B cell (primary cell): ENCODE measurements at regions of chr7 and their contacts with region 1.

Region 1: GRCh38 chr7:123865517-123866117 is 20.6 kb downstream of the HYAL4 start:
- DNase-seq: peak; percentile 59
- ATAC-seq: peak; percentile 53
- H3K4me3 ChIP-seq: no peak overlapping the region
- H3K4me3 Mint-ChIP-seq: no peak overlapping the region
- H3K27ac ChIP-seq: no peak overlapping the region
- H3K27ac Mint-ChIP-seq: no peak overlapping the region
- H3K4me1 ChIP-seq: no peaks in the 10 kb centered on the region
- H3K4me1 Mint-ChIP-seq: no peaks in the 10 kb centered on the region
- H3K27me3 ChIP-seq: no peaks in the 10 kb centered on the region
- H3K27me3 Mint-ChIP-seq: peaks cover 3% of the 10 kb centered on the region
- CTCF ChIP-seq: peak; percentile 82

Region 2: GRCh38 chr7:123580406-123581161 is 285.0 kb before region 1 on chr7:
- CTCF ChIA-PET with region 1: no interaction called
- POLR2A ChIA-PET with region 1: no interaction called
- intact Hi-C with region 1: loop called (anchors 5 kb)
- DNase-seq: no peak
- ATAC-seq: no peak
- H3K4me3 ChIP-seq: no peak overlapping the region
- H3K4me3 Mint-ChIP-seq: no peak overlapping the region
- H3K27ac ChIP-seq: no peak overlapping the region
- H3K27ac Mint-ChIP-seq: no peak overlapping the region
- H3K4me1 ChIP-seq: no peaks in the 10 kb centered on the region
- H3K4me1 Mint-ChIP-seq: no peaks in the 10 kb centered on the region
- H3K27me3 ChIP-seq: peaks cover 0 to 21% (median 6%) of the 10 kb centered on the region in 4 experiments
- H3K27me3 Mint-ChIP-seq: peaks cover 29% of the 10 kb centered on the region
- CTCF ChIP-seq: peak; percentile 20

Region 3: DNA sequence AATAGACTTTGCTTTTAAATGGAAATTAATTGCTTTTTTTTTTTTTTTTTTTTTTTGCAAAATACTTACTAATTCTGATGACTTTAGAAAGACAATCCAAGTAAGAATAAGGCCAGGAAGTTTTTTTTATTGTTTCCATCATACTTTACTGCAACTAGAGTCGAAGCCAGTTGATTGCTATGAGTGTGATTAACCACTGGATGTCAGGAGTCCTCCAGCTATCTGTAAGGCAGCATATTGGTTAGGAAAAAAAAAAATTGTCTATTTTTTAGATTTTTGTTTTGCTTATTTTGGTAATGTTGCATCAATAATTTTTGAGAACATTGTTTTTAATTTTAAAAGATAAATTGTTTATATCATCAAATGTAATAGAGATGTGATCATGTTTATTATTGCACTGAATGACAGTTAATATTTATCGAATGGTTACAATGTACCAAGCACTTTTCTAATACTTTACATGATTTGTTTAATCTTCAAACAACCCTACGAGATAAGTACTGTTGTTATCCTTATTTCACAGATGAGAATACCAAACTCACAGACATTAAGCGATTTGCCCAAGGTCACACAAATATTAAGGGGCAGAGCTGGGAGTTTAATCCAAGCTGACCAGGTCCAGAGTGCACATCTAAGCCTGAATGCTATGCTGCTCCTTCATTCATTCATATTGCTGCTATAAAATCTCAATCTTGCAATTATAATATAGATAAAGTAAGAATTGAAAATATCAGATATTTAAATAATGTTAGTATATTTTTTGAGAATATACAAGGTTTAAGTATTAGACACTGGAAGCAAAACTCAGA is 229.9 kb before region 1 on chr7:
- CTCF ChIA-PET with region 1: interaction called, 14 read pairs
- POLR2A ChIA-PET with region 1: no interaction called
- intact Hi-C with region 1: loop called (anchors 2 kb)
- DNase-seq: no peak
- ATAC-seq: no peak
- H3K4me3 ChIP-seq: no peak overlapping the region
- H3K4me3 Mint-ChIP-seq: no peak overlapping the region
- H3K27ac ChIP-seq: no peak overlapping the region
- H3K27ac Mint-ChIP-seq: no peak overlapping the region
- H3K4me1 ChIP-seq: no peaks in the 10 kb centered on the region
- H3K4me1 Mint-ChIP-seq: no peaks in the 10 kb centered on the region
- H3K27me3 ChIP-seq: peaks cover 0 to 10% (median 4%) of the 10 kb centered on the region in 4 experiments
- H3K27me3 Mint-ChIP-seq: peaks cover 25% of the 10 kb centered on the region
- CTCF ChIP-seq: peak; percentile 32

Region 4: GRCh38 chr7:123682690-123683089 is 182.9 kb before region 1 on chr7:
- CTCF ChIA-PET with region 1: interaction called, 36 read pairs
- POLR2A ChIA-PET with region 1: no interaction called
- intact Hi-C with region 1: loop called (anchors 1 kb)
- DNase-seq: peak; percentile 38
- ATAC-seq: no peak
- H3K4me3 ChIP-seq: no peak overlapping the region
- H3K4me3 Mint-ChIP-seq: no peak overlapping the region
- H3K27ac ChIP-seq: no peak overlapping the region
- H3K27ac Mint-ChIP-seq: no peak overlapping the region
- H3K4me1 ChIP-seq: no peaks in the 10 kb centered on the region
- H3K4me1 Mint-ChIP-seq: no peaks in the 10 kb centered on the region
- H3K27me3 ChIP-seq: no peaks in the 10 kb centered on the region
- H3K27me3 Mint-ChIP-seq: no peaks in the 10 kb centered on the region
- CTCF ChIP-seq: peak; percentile 69

Region 5: DNA sequence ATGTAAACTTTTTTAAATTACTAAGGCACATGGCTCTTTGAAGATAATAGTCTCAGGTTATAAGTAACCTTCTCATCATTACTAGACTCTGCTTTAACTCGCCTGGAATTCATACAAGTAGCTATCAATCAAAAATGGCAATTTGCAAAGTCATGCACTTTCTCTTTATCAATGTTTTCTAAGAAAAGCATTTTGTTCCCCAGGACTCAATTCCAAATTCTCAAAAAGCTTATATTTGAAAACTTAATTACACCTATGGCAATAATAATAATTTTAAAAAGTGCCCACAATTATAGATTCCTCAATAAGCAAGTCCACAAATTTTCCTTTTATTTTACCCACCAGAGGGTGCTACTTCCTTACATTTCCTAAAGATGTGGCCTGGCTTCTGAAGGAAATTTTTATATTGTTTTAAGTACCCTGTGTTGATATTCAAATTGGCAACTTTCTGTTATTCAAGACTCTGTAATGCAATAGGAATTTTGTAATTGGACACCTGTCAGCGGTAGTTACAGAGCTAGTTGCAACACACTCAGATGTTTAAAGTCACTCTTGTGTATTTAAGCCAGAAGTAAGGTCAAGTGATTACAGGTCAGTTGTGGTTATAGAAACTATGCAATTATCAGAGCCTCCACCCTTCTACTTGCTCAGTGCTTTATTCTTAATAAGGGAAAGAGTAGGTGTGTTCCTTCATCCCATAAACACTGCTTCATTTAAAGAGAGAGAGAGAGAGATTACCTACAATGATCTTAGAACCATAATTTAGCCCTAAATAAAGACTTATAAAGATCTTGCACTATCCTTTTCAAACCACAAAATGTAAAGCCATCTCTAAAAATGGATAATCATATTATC is 67.7 kb before region 1 on chr7:
- CTCF ChIA-PET with region 1: interaction called, 6 read pairs
- POLR2A ChIA-PET with region 1: no interaction called
- intact Hi-C with region 1: loop called (anchors 1 kb)
- DNase-seq: peak; percentile 4
- ATAC-seq: no peak
- H3K4me3 ChIP-seq: no peak overlapping the region
- H3K4me3 Mint-ChIP-seq: no peak overlapping the region
- H3K27ac ChIP-seq: no peak overlapping the region
- H3K27ac Mint-ChIP-seq: no peak overlapping the region
- H3K4me1 ChIP-seq: no peaks in the 10 kb centered on the region
- H3K4me1 Mint-ChIP-seq: no peaks in the 10 kb centered on the region
- H3K27me3 ChIP-seq: no peaks in the 10 kb centered on the region
- H3K27me3 Mint-ChIP-seq: no peaks in the 10 kb centered on the region
- CTCF ChIP-seq: peak; percentile 35